Heart right ventricle (tissue), 16 donors: ENCODE measurements at regions of chr4 and their contacts with region 1.

Region 1: DNA sequence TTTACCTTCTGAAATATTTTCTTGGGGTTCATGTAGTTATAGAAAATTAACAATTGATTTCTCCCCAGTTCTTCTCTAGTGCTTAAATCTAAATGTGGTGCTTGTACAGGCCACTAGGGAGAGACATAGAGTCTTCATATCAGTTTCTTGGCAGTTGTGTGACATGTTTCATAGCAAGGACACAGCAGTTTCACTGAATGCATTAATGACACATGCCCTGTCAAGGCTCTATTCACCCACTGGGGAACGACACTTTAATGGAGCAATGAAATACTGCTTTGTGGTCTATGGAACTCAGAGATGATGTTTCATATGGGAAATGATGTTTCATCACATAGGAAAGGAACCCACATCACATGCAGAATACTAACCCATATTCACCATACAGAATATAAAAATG is 2.8 kb downstream of the VEGFC start:
- DNase-seq: peak in 1 of 2 donors; percentile 13
- ATAC-seq: peak in 5 of 8 donors; percentile 27 to 53 (median 47)
- H3K4me3 ChIP-seq: peak overlapping the region in 8 of 10 donors; percentile 63 to 80 (median 76)
- H3K27ac ChIP-seq: peak overlapping the region in 5 of 10 donors; percentile 83 to 89 (median 87)
- H3K4me1 ChIP-seq: peaks cover 0 to 9% (median 0%) of the 10 kb centered on the region in 9 donors
- H3K27me3 ChIP-seq: peaks cover 0 to 49% (median 0%) of the 10 kb centered on the region in 7 donors
- CTCF ChIP-seq: peak; percentile 30 to 77 (median 66)

Region 2: GRCh38 chr4:176383273-176384077 is 406.5 kb before region 1 on chr4:
- intact Hi-C with region 1: loop called in 7 of 10 experiments (anchors 2 to 5 kb)
- DNase-seq: peak in 1 of 2 donors; percentile 29
- ATAC-seq: peak in 6 of 8 donors; percentile 38 to 81 (median 68)
- H3K4me3 ChIP-seq: peak overlapping the region in 6 of 10 donors; percentile 6 to 31 (median 13)
- H3K27ac ChIP-seq: peak overlapping the region in 7 of 10 donors; percentile 3 to 78 (median 69)
- H3K4me1 ChIP-seq: peaks cover 0 to 22% (median 0%) of the 10 kb centered on the region in 9 donors
- H3K27me3 ChIP-seq: no peaks in the 10 kb centered on the region
- CTCF ChIP-seq: no peak

Region 3: GRCh38 chr4:176563591-176563990 is 226.4 kb before region 1 on chr4:
- intact Hi-C with region 1: loop called in 6 of 10 experiments (anchors 2 to 10 kb)
- DNase-seq: no peak
- ATAC-seq: no peak
- H3K4me3 ChIP-seq: no peak overlapping the region
- H3K27ac ChIP-seq: no peak overlapping the region
- H3K4me1 ChIP-seq: no peaks in the 10 kb centered on the region
- H3K27me3 ChIP-seq: no peaks in the 10 kb centered on the region
- CTCF ChIP-seq: peak in 6 of 9 donors; percentile 21 to 49 (median 42)

Region 4: GRCh38 chr4:176726803-176727202 is 63.2 kb before region 1 on chr4:
- intact Hi-C with region 1: loop called in 2 of 10 experiments (anchors 10 kb)
- DNase-seq: no peak
- ATAC-seq: peak in 3 of 8 donors; percentile 41 to 57 (median 45)
- H3K4me3 ChIP-seq: peak overlapping the region in 3 of 10 donors; percentile 1 to 7 (median 4)
- H3K27ac ChIP-seq: peak overlapping the region in 6 of 10 donors; percentile 2 to 63 (median 25)
- H3K4me1 ChIP-seq: peaks cover 0 to 21% (median 5%) of the 10 kb centered on the region in 9 donors
- H3K27me3 ChIP-seq: no peaks in the 10 kb centered on the region
- CTCF ChIP-seq: no peak

Region 5: DNA sequence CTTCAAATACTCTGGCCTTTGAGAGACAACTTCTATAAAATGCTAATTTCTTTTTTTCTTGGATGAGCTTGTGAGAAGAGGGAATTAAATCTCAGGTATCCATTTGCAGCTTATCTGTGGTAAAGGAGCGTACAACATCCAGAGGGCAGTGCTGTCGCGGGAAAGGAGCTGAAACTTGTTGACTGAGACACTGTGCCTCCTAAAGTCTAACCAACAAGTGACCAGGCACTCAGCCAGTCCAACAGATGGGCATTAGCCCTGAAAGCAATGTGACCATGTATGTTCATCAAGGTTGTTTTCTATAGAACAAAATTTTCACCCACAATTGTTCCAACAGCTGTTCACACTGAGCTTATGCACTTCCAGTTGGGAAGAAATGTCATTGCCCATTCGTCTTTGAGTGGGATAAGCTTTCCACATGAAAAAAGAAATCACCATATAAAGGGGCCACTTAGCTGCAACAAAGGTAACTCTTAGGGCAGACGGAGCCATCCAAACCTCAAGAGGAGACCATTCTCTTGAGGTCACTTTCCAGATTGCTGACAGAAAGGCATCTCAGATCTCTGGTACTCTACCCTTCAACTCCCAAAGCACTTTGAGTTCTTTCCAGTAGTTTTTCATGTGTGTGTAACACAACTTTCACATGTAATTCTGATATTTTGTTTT is 274.9 kb after region 1 on chr4:
- intact Hi-C with region 1: no loop called
- DNase-seq: no peak
- ATAC-seq: no peak
- H3K4me3 ChIP-seq: no peak overlapping the region
- H3K27ac ChIP-seq: no peak overlapping the region
- H3K4me1 ChIP-seq: no peaks in the 10 kb centered on the region
- H3K27me3 ChIP-seq: no peaks in the 10 kb centered on the region
- CTCF ChIP-seq: no peak